Naive thymus-derived CD4-positive, alpha-beta T cell (primary cell): ENCODE measurements at regions of chr5 and their contacts with region 1.

Region 1: DNA sequence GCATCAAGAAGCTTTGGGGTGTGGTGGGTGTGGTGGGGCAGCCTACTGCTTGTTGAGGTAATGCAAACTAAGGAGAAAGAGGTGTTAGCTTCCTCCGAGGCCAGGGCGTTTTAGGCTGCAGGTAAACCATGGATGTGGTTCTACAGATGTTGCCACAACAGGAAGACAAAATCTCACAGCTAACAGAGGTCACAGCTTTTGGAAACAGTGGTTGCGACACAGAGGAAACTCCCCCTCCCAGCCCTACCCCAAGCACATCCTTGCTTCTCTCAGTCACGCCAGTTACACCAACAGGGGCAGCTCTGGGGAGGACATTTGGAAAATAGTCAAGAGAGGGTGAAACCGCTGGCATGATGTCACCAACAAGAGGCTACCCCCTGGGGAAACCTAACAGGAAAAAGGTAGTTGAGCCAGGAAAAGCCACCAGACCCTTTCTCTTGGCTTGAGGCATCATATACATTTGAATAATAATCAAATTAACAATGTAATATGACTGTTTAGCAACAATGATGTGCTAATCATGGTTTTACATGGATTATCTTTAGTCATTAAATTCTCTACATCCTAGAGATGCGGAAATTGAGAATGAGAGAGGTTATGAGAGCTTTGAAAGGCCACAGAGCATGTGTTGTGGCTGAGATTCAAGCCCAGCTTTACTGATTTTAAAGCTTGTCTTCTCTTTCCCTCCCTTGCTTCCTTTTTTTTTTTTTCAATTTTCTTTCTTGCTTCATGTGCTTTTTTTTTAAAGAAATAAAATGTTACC is 82.2 kb upstream of the IL12B start:
- DNase-seq: peak; percentile 9 to 88 (median 80)
- ATAC-seq: peak; percentile 94
- H3K4me3 ChIP-seq: no peak overlapping the region
- H3K4me3 Mint-ChIP-seq: peak overlapping the region; percentile 26 to 80 (median 73)
- H3K27ac ChIP-seq: peak overlapping the region; percentile 22
- H3K27ac Mint-ChIP-seq: peak overlapping the region; percentile 80 to 97 (median 92)
- H3K4me1 ChIP-seq: peaks cover 30 to 42% of the 10 kb centered on the region in 2 donors
- H3K4me1 Mint-ChIP-seq: peaks cover 28 to 62% (median 42%) of the 10 kb centered on the region in 7 donors
- H3K27me3 ChIP-seq: no peaks in the 10 kb centered on the region
- H3K27me3 Mint-ChIP-seq: peaks cover 0 to 19% (median 0%) of the 10 kb centered on the region in 5 donors

Region 2: GRCh38 chr5:157603333-157604190 is 1808.9 kb before region 1 on chr5:
- CTCF ChIA-PET with region 1: no interaction called
- POLR2A ChIA-PET with region 1: no interaction called
- intact Hi-C with region 1: loop called in 1 of 2 experiments (anchors 5 kb)
- DNase-seq: peak in 8 of 9 donors; percentile 16 to 65 (median 50)
- ATAC-seq: peak; percentile 90
- H3K4me3 ChIP-seq: peak overlapping the region; percentile 1
- H3K4me3 Mint-ChIP-seq: peak overlapping the region in 9 of 10 donors; percentile 0 to 74 (median 63)
- H3K27ac ChIP-seq: no peak overlapping the region
- H3K27ac Mint-ChIP-seq: peak overlapping the region in 7 of 9 donors; percentile 1 to 85 (median 49)
- H3K4me1 ChIP-seq: peaks cover 26 to 39% of the 10 kb centered on the region in 2 donors
- H3K4me1 Mint-ChIP-seq: peaks cover 30 to 81% (median 40%) of the 10 kb centered on the region in 7 donors
- H3K27me3 ChIP-seq: no peaks in the 10 kb centered on the region
- H3K27me3 Mint-ChIP-seq: no peaks in the 10 kb centered on the region

Region 3: DNA sequence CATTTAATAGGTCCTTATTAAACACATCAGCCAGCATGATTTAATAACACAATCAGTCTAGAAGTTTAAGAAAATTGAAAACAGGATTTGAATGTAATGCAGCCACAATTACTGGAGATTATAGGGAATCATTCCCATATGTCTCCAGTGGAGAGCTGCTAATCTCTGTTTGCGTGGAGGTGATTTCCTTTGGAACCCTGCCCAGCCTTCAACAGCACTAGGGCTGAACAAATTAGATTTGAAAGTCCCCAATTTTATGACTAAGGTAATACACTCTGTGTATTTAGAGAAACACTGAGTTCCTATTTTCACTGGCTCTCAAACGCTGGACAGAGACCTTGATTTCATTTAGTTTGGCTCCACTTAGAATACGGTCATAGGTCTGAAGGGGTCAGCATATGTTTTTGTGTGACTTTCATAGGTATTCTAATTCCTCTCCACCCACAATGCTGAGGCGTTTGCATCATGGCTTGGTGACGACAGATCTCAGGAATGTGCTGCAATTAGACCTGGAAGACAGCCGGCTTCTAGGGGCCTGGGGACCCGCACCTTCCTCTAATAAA is 821.1 kb before region 1 on chr5:
- CTCF ChIA-PET with region 1: no interaction called
- POLR2A ChIA-PET with region 1: no interaction called
- intact Hi-C with region 1: no loop called
- DNase-seq: no peak
- ATAC-seq: no peak
- H3K4me3 ChIP-seq: no peak overlapping the region
- H3K4me3 Mint-ChIP-seq: no peak overlapping the region
- H3K27ac ChIP-seq: no peak overlapping the region
- H3K27ac Mint-ChIP-seq: no peak overlapping the region
- H3K4me1 ChIP-seq: no peaks in the 10 kb centered on the region
- H3K4me1 Mint-ChIP-seq: peaks cover 0 to 4% (median 0%) of the 10 kb centered on the region in 7 donors
- H3K27me3 ChIP-seq: no peaks in the 10 kb centered on the region
- H3K27me3 Mint-ChIP-seq: no peaks in the 10 kb centered on the region

Region 4: GRCh38 chr5:159262859-159263567 is 149.5 kb before region 1 on chr5 and contains the start of gene UBLCP1:
- CTCF ChIA-PET with region 1: no interaction called
- POLR2A ChIA-PET with region 1: interaction called, 4 read pairs
- intact Hi-C with region 1: loop called (anchors 1 to 2 kb)
- DNase-seq: peak; percentile 65 to 88 (median 83)
- ATAC-seq: peak; percentile 91
- H3K4me3 ChIP-seq: peak within 1 kb of the TSS; percentile 76
- H3K4me3 Mint-ChIP-seq: peak within 1 kb of the TSS; percentile 89 to 99 (median 96)
- H3K27ac ChIP-seq: peak within 1 kb of the TSS; percentile 90
- H3K27ac Mint-ChIP-seq: peak within 1 kb of the TSS; percentile 97 to 100 (median 99)
- H3K4me1 ChIP-seq: peaks cover 8 to 17% of the 10 kb centered on the region in 2 donors
- H3K4me1 Mint-ChIP-seq: peaks cover 28 to 65% (median 52%) of the 10 kb centered on the region in 7 donors
- H3K27me3 ChIP-seq: no peaks in the 10 kb centered on the region
- H3K27me3 Mint-ChIP-seq: peaks cover 0 to 4% (median 0%) of the 10 kb centered on the region in 5 donors
- total RNA-seq, gene UBLCP1: 18.2 to 30.9 (median 30.2) TPM

Region 5: DNA sequence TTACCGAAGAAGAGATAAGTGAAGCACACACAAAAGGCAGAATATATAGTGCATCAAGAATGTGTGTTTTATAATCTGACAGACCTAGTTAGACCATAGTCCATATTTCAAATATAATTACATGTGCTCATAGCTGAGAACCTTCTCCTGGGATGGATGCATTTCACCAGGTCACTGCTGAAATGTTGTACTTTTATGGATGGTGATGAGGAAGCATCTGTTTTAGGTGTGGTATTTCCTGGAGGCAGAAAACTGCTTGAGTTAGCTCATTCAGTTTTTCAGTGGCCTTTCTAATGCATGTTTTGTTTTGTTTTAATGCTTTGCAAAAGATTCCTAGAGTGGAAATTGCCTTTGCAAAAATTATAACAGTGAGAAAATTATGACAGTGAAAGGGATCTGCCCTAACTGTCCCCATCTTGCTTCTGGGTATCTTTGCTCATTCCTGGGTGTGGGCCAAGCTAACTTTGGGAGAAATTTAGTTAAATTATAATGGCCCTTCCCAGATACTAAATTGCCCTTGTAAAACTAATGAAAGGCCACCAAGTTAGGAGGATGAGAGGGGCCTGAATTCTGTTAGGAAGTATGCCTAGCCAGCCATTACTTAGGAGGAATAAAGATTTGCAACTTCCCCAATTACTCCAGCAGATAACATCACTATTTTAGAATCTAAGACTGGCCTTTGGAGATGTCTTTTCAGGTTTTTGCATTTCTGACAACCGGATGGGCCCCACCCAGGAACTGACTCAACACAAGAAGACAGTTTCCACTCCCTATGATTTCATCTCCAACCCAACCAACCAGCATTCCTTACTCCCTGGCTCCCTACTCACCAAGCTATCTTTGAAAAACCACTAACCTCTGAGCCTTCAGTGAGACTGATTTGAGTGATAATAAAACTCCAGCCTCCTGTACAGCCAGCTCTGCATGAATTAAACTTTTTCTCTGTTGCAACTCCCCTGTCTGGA is 75.2 kb before region 1 on chr5:
- CTCF ChIA-PET with region 1: interaction called, 3 read pairs
- POLR2A ChIA-PET with region 1: interaction called, 5 read pairs
- intact Hi-C with region 1: loop called in 1 of 2 experiments (anchors 1 kb)
- DNase-seq: peak in 8 of 9 donors; percentile 17 to 43 (median 34)
- ATAC-seq: peak; percentile 74
- H3K4me3 ChIP-seq: no peak overlapping the region
- H3K4me3 Mint-ChIP-seq: peak overlapping the region; percentile 20 to 73 (median 55)
- H3K27ac ChIP-seq: peak overlapping the region; percentile 20
- H3K27ac Mint-ChIP-seq: peak overlapping the region; percentile 67 to 91 (median 86)
- H3K4me1 ChIP-seq: peaks cover 25 to 40% of the 10 kb centered on the region in 2 donors
- H3K4me1 Mint-ChIP-seq: peaks cover 26 to 82% (median 58%) of the 10 kb centered on the region in 7 donors
- H3K27me3 ChIP-seq: no peaks in the 10 kb centered on the region
- H3K27me3 Mint-ChIP-seq: no peaks in the 10 kb centered on the region

Region 6: DNA sequence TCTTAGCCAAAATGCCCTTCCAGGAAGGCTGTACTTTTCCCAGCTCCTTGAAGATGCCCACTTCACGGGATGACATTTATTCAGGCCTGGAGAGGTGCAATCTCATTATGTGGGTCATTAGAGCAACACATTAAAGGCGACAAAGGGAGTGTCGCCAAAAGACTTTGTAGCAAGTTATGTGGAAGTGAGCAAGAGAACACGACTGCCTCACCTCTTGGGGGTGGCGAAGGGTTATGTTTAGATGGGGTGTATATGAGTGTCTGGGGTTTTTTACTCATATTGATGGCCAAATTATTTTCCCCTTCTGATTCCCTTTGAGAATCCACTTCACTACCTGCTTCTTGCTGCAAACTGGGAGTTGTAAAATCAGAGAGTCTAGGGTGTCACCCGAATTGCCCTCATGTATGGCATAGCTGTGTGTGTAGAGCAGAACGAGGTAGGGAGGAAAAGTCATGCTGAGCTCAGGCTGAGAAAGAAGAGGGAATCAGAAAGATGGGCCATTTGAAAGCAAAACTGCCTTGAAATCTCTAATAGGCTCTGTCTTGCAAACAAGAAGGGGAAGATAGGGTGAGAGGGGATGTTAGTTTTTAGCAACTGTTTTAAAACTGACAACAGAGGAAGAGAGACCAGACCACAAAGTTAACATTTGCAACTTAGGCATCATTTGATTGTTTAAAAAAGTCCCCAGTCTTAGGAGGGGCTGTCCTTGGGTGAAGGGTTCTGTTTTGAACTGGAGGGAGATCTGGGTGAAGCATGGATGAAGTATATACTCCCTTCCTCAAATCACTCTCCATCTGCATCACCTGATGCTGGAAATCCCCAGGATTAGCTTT is 14.9 kb after region 1 on chr5:
- CTCF ChIA-PET with region 1: no interaction called
- POLR2A ChIA-PET with region 1: no interaction called
- intact Hi-C with region 1: loop called (anchors 1 to 2 kb)
- DNase-seq: peak in 2 of 9 donors; percentile 16 to 25
- ATAC-seq: peak; percentile 69
- H3K4me3 ChIP-seq: no peak overlapping the region
- H3K4me3 Mint-ChIP-seq: peak overlapping the region in 5 of 10 donors; percentile 12 to 65 (median 48)
- H3K27ac ChIP-seq: no peak overlapping the region
- H3K27ac Mint-ChIP-seq: peak overlapping the region in 7 of 9 donors; percentile 2 to 90 (median 67)
- H3K4me1 ChIP-seq: peaks cover 13 to 36% of the 10 kb centered on the region in 2 donors
- H3K4me1 Mint-ChIP-seq: peaks cover 11 to 48% (median 20%) of the 10 kb centered on the region in 7 donors
- H3K27me3 ChIP-seq: no peaks in the 10 kb centered on the region
- H3K27me3 Mint-ChIP-seq: peaks cover 0 to 45% (median 0%) of the 10 kb centered on the region in 5 donors

Region 7: GRCh38 chr5:159773062-159773924 is 360.8 kb after region 1 on chr5:
- CTCF ChIA-PET with region 1: no interaction called
- POLR2A ChIA-PET with region 1: no interaction called
- intact Hi-C with region 1: loop called in 1 of 2 experiments (anchors 1 kb)
- DNase-seq: peak in 3 of 9 donors; percentile 2 to 90 (median 31)
- ATAC-seq: peak; percentile 83
- H3K4me3 ChIP-seq: no peak overlapping the region
- H3K4me3 Mint-ChIP-seq: peak overlapping the region; percentile 46 to 79 (median 68)
- H3K27ac ChIP-seq: no peak overlapping the region
- H3K27ac Mint-ChIP-seq: peak overlapping the region in 1 of 9 donors; percentile 61
- H3K4me1 ChIP-seq: no peaks in the 10 kb centered on the region
- H3K4me1 Mint-ChIP-seq: peaks cover 5 to 21% (median 7%) of the 10 kb centered on the region in 7 donors
- H3K27me3 ChIP-seq: peaks cover 0 to 6% of the 10 kb centered on the region in 2 donors
- H3K27me3 Mint-ChIP-seq: peaks cover 28 to 37% (median 29%) of the 10 kb centered on the region in 5 donors

Region 8: GRCh38 chr5:160418561-160419457 is 1006.3 kb after region 1 on chr5 and contains the start of gene SLU7:
- CTCF ChIA-PET with region 1: no interaction called
- POLR2A ChIA-PET with region 1: no interaction called
- intact Hi-C with region 1: loop called in 1 of 2 experiments (anchors 5 kb)
- DNase-seq: peak; percentile 80 to 93 (median 91)
- ATAC-seq: peak; percentile 86
- H3K4me3 ChIP-seq: peak within 1 kb of the TSS; percentile 94
- H3K4me3 Mint-ChIP-seq: peak within 1 kb of the TSS; percentile 91 to 100 (median 96)
- H3K27ac ChIP-seq: peak within 1 kb of the TSS; percentile 98
- H3K27ac Mint-ChIP-seq: peak within 1 kb of the TSS; percentile 95 to 100 (median 98)
- H3K4me1 ChIP-seq: peaks cover 23 to 28% of the 10 kb centered on the region in 2 donors
- H3K4me1 Mint-ChIP-seq: peaks cover 45 to 85% (median 79%) of the 10 kb centered on the region in 7 donors
- H3K27me3 ChIP-seq: no peaks in the 10 kb centered on the region
- H3K27me3 Mint-ChIP-seq: no peaks in the 10 kb centered on the region
- total RNA-seq, gene SLU7: 53.0 to 85.3 (median 77.0) TPM